ENCODE measurements at regions of chr21 and their contacts with region 1.

Region 1: DNA sequence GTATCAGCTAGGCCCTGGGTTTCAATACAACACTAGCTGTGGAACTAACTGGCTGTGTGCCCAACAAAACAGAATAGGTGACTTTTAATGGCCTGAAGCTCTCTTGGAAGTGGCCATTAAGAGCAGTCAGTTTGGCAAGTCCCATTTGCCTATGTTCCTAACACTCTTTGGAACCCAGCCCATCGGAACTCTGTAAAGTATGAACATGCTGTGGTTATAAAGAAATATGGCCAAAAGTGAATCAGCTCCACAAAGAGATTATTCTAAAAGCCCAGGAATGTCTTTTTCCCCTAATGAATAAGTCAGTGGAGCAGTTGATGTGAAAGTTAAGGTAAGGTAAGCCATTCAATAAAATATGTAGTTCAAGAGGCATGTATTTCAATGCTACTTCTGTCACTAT is 223.7 kb upstream of the ADAMTS5 start:
- DNase-seq: no peak
- ATAC-seq: no peak
- H3K4me3 ChIP-seq: no peak overlapping the region
- H3K4me3 Mint-ChIP-seq: no peak overlapping the region
- H3K27ac ChIP-seq: no peak overlapping the region
- H3K27ac Mint-ChIP-seq: no peak overlapping the region
- H3K4me1 ChIP-seq: no peaks in the 10 kb centered on the region
- H3K4me1 Mint-ChIP-seq: no peaks in the 10 kb centered on the region
- H3K27me3 ChIP-seq: no peaks in the 10 kb centered on the region
- H3K27me3 Mint-ChIP-seq: no peaks in the 10 kb centered on the region

Region 2: DNA sequence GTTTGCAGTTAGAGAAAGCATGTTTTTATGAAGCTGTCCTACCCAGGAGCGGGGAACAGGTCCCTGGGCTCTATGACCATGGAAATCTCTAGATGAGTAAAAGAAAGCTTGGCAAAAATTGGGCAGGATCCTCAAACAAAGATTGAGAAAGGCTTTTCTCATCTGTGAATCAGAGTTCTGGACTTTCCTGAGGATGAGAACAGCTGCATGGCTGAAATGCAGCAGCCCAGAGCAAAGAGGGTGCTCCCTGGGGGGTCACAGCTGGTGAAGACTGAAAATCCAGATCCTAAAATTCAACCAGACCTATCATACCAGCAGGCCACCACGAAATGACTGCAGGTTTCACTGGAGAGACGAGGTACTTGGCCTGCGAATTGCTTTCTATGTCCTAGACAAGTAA is 954.3 kb before region 1 on chr21:
- CTCF ChIA-PET with region 1: interaction called in 1 of 2 experiments, 10 read pairs
- POLR2A ChIA-PET with region 1: no interaction called
- DNase-seq: no peak
- ATAC-seq: no peak
- H3K4me3 ChIP-seq: no peak overlapping the region
- H3K4me3 Mint-ChIP-seq: no peak overlapping the region
- H3K27ac ChIP-seq: no peak overlapping the region
- H3K27ac Mint-ChIP-seq: no peak overlapping the region
- H3K4me1 ChIP-seq: no peaks in the 10 kb centered on the region
- H3K4me1 Mint-ChIP-seq: no peaks in the 10 kb centered on the region
- H3K27me3 ChIP-seq: no peaks in the 10 kb centered on the region
- H3K27me3 Mint-ChIP-seq: peaks cover under 1 to 5% of the 10 kb centered on the region in 2 donors

Region 3: GRCh38 chr21:27275294-27275927 is 84.8 kb after region 1 on chr21:
- CTCF ChIA-PET with region 1: no interaction called
- POLR2A ChIA-PET with region 1: no interaction called
- DNase-seq: no peak
- ATAC-seq: no peak
- H3K4me3 ChIP-seq: no peak overlapping the region
- H3K4me3 Mint-ChIP-seq: no peak overlapping the region
- H3K27ac ChIP-seq: no peak overlapping the region
- H3K27ac Mint-ChIP-seq: no peak overlapping the region
- H3K4me1 ChIP-seq: no peaks in the 10 kb centered on the region
- H3K4me1 Mint-ChIP-seq: no peaks in the 10 kb centered on the region
- H3K27me3 ChIP-seq: no peaks in the 10 kb centered on the region
- H3K27me3 Mint-ChIP-seq: no peaks in the 10 kb centered on the region

Region 4: GRCh38 chr21:27622631-27623030 is 432.0 kb after region 1 on chr21:
- CTCF ChIA-PET with region 1: no interaction called
- POLR2A ChIA-PET with region 1: no interaction called
- DNase-seq: no peak
- ATAC-seq: no peak
- H3K4me3 ChIP-seq: no peak overlapping the region
- H3K4me3 Mint-ChIP-seq: no peak overlapping the region
- H3K27ac ChIP-seq: no peak overlapping the region
- H3K27ac Mint-ChIP-seq: no peak overlapping the region
- H3K4me1 ChIP-seq: no peaks in the 10 kb centered on the region
- H3K4me1 Mint-ChIP-seq: no peaks in the 10 kb centered on the region
- H3K27me3 ChIP-seq: no peaks in the 10 kb centered on the region
- H3K27me3 Mint-ChIP-seq: no peaks in the 10 kb centered on the region

Measured in T-cell (primary cell).